ENCODE measurements at regions of chr14 and their contacts with region 1.

Region 1: DNA sequence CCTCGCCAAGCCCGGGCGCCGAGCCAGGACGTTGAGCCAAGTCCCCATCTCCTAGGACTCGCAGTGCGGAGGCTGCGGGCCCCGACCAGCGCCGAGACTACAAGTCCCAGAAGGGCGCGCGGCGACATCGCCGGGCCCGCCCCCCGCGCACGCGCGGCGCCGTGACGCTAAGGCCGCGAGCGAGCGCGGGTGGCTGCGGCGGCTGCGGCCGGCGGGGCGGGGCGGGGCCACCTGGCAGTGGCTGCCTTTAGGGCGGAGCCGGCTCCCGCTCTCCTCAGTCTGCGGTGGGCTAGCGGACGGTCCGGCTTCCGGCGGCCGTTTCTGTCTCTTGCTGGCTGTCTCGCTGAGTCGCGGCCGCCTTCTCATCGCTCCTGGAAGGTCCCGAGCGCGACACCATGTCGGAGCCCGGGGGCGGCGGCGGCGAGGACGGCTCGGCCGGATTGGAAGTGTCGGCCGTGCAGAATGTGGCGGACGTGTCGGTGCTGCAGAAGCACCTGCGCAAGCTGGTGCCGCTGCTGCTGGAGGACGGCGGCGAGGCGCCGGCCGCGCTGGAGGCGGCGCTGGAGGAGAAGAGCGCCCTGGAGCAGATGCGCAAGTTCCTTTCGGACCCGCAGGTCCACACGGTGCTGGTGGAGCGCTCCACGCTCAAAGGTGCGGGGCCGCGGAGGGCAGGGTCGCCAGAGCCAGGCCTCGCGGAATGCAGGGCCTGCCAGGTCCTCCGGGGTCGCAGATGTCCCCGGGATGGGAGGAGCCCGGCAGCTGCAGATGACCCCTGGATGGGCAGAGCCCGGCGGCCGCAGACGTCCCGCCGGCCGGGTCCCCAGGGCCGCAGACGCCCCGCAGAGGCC is at the start of gene DYNC1H1:
- DNase-seq: peak; percentile 75 to 94 (median 87)
- ATAC-seq: peak; percentile 84
- H3K4me3 ChIP-seq: peak within 1 kb of the TSS; percentile 87 to 92
- H3K4me3 Mint-ChIP-seq: peak within 1 kb of the TSS; percentile 90
- H3K27ac ChIP-seq: peak within 1 kb of the TSS; percentile 74 to 88
- H3K27ac Mint-ChIP-seq: peak within 1 kb of the TSS; percentile 91
- H3K4me1 ChIP-seq: peaks cover 31% of the 10 kb centered on the region
- H3K4me1 Mint-ChIP-seq: peaks cover 45% of the 10 kb centered on the region
- H3K27me3 ChIP-seq: no peaks in the 10 kb centered on the region
- H3K27me3 Mint-ChIP-seq: no peaks in the 10 kb centered on the region
- CTCF ChIP-seq: no peak
- total RNA-seq, gene DYNC1H1: 359 TPM

Region 2: GRCh38 chr14:102020058-102020971 is 55.8 kb after region 1 on chr14:
- CTCF ChIA-PET with region 1: interaction called, 6 read pairs
- POLR2A ChIA-PET with region 1: interaction called, 7 read pairs
- intact Hi-C with region 1: loop called in 1 of 2 experiments (anchors 2 kb)
- DNase-seq: peak; percentile 6 to 80 (median 35)
- ATAC-seq: peak; percentile 90
- H3K4me3 ChIP-seq: no peak overlapping the region
- H3K4me3 Mint-ChIP-seq: peak overlapping the region; percentile 64
- H3K27ac ChIP-seq: peak overlapping the region in 1 of 2 experiments; percentile 54
- H3K27ac Mint-ChIP-seq: peak overlapping the region; percentile 90
- H3K4me1 ChIP-seq: peaks cover 24% of the 10 kb centered on the region
- H3K4me1 Mint-ChIP-seq: peaks cover 19% of the 10 kb centered on the region
- H3K27me3 ChIP-seq: no peaks in the 10 kb centered on the region
- H3K27me3 Mint-ChIP-seq: no peaks in the 10 kb centered on the region
- CTCF ChIP-seq: no peak

Region 3: DNA sequence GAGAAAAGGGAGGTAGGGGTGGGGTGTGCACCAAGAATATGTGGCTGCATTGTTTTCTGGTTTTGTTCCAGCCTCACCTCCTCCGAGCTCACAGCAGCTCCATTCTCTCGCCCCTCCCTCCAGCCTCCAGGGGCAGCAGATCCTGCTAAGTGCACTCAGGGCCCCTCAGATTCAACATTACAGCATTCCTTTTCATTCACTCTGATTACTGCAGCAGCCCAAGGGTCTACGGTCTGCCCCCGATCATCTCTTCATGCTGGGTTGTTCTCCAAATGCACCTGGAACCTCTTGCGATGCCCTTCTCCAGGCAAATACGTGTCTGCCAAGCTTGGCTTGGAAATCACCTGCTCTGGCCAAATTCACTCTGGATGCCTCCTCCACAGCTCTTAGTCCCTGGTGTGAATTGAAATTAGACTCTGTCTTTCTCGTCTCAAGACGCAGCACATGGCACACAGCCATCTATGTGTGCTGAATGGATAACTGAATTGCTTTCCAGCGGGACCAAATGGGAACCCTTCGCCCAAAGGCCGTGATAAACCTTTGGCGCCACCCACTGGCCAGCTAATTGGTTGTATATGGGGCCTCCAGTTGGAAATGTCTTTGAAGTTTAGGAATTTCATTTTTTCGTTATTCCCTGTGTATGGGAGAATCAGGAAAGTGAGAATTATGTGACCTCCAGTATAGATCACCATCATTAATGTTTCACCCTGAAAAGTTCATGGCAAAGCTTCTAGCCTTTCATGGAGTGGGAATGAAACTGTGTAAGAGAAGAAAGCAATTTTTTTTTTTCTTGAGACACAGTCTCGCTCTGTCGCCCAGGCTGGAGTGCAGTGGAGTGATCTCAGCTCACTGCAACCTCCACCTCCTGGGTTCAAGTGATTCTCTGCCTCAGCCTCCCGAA is 131.9 kb after region 1 on chr14:
- CTCF ChIA-PET with region 1: interaction called, 96 read pairs
- POLR2A ChIA-PET with region 1: interaction called, 4 read pairs
- intact Hi-C with region 1: loop called (anchors 1 kb)
- DNase-seq: peak; percentile 40 to 83 (median 75)
- ATAC-seq: peak; percentile 80
- H3K4me3 ChIP-seq: no peak overlapping the region
- H3K4me3 Mint-ChIP-seq: no peak overlapping the region
- H3K27ac ChIP-seq: no peak overlapping the region
- H3K27ac Mint-ChIP-seq: no peak overlapping the region
- H3K4me1 ChIP-seq: no peaks in the 10 kb centered on the region
- H3K4me1 Mint-ChIP-seq: peaks cover 3% of the 10 kb centered on the region
- H3K27me3 ChIP-seq: no peaks in the 10 kb centered on the region
- H3K27me3 Mint-ChIP-seq: no peaks in the 10 kb centered on the region
- CTCF ChIP-seq: peak; percentile 89

Region 4: DNA sequence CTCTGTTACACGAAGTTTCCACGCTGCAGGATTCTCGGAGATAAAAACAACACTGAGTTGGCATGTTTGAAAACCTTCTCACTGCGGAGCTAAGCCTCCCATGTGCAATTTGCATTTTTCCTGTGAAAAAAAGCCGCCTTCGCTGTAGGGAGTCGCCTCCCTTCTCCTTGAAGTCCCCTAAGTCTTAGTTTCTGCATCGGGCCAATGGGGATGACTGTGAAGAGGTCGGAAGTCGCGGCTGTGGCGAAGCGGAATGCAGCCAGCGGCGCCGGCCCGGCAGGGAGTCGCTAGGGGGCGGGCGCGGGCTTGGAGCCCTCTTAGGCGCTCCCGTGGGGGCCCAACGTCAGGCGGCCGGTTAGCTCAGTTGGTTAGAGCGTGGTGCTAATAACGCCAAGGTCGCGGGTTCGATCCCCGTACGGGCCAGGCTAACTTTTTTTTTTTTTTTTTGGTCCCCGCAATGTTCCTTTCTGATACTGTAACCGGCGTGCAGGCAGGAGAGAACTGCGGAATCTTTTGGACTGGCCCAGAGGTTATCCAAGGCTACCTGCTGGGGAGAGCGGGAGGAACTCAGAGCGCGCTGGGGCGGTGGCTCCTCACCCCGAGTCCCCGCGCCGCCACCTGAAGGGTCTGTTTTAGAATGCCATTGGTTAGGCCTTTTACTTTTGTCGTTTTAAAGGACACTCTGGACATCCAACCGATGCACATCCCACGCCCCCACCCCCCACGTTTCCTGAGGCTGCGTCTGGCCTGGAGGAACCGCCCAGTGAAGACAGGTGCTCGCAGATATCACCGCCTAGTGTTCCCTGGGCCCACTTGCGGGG is 352.4 kb after region 1 on chr14:
- CTCF ChIA-PET with region 1: interaction called, 11 read pairs
- POLR2A ChIA-PET with region 1: interaction called, 4 read pairs
- intact Hi-C with region 1: loop called (anchors 1 to 2 kb)
- DNase-seq: peak; percentile 86 to 100 (median 95)
- ATAC-seq: peak; percentile 55
- H3K4me3 ChIP-seq: peak overlapping the region; percentile 57 to 74
- H3K4me3 Mint-ChIP-seq: peak overlapping the region; percentile 93
- H3K27ac ChIP-seq: peak overlapping the region; percentile 42 to 73
- H3K27ac Mint-ChIP-seq: peak overlapping the region; percentile 94
- H3K4me1 ChIP-seq: peaks cover 42% of the 10 kb centered on the region
- H3K4me1 Mint-ChIP-seq: peaks cover 59% of the 10 kb centered on the region
- H3K27me3 ChIP-seq: no peaks in the 10 kb centered on the region
- H3K27me3 Mint-ChIP-seq: no peaks in the 10 kb centered on the region
- CTCF ChIP-seq: peak; percentile 82

Region 5: DNA sequence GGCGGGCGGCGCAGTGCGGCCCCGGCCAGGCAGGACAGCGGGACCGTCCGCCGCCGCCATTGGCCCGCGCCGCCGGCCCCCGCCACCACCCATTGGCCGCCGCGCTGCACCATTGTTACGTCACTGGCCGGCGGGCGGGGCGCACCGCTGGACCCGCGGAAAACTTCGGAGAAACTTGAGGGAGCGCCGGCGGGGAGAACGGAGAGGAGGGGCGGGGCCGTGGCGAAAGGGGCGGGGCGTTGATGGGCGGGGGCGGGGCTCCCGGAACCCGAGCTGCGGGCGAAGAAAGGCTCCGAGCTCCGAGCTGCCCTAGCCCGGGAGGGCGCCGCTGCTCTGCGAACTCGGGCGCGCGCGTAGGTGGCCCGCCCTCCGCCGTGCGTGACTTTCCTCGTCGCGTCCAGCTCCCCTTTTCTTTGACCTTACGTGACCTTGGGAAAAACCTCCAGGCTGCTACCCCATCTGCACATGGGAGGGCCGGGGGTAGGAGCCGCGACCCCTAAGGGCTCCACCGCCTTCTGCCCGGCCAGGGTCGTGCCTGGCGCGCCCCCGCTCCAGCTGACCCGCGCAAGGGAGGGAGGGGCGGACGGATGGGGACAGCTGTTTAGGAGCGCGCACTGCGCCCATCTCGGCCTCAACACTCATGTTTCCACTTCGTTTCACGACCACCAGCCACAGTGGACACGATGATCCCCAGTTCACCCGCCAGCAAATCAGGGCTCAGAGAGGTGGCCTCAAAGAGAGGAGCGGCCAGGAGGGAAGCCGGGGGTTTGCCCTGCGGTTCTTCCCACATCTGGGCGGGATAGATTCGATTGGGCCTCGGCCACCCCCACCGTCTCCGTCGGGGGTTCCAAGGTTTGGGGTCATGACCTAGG is 545.5 kb after region 1 on chr14 and contains the start of gene ANKRD9:
- CTCF ChIA-PET with region 1: no interaction called
- POLR2A ChIA-PET with region 1: no interaction called
- intact Hi-C with region 1: loop called in 1 of 2 experiments (anchors 5 kb)
- DNase-seq: peak; percentile 57 to 91 (median 83)
- ATAC-seq: peak; percentile 86
- H3K4me3 ChIP-seq: peak within 1 kb of the TSS; percentile 78 to 96
- H3K4me3 Mint-ChIP-seq: peak within 1 kb of the TSS; percentile 86
- H3K27ac ChIP-seq: peak within 1 kb of the TSS; percentile 48 to 50
- H3K27ac Mint-ChIP-seq: peak within 1 kb of the TSS; percentile 64
- H3K4me1 ChIP-seq: peaks cover 16% of the 10 kb centered on the region
- H3K4me1 Mint-ChIP-seq: peaks cover 9% of the 10 kb centered on the region
- H3K27me3 ChIP-seq: no peaks in the 10 kb centered on the region
- H3K27me3 Mint-ChIP-seq: no peaks in the 10 kb centered on the region
- CTCF ChIP-seq: no peak
- total RNA-seq, gene ANKRD9: 4.7 to 5.0 TPM